Activated CD4-positive, alpha-beta T cell treated with anti-CD3 and anti-CD28 coated beads, Interleukin-2, amount 10 ng/mL, durations not matched to agents 24 days and 14 days (primary cell): ENCODE measurements at regions of chr2 and their contacts with region 1.

Region 1: GRCh38 chr2:98608116-98608999 is at the starts of genes COA5 and UNC50:
- DNase-seq: peak; percentile 98
- H3K4me3 Mint-ChIP-seq: peak within 1 kb of the TSS; percentile 90
- H3K27ac Mint-ChIP-seq: peak within 1 kb of the TSS; percentile 95
- H3K4me1 Mint-ChIP-seq: peaks cover 50% of the 10 kb centered on the region
- H3K27me3 Mint-ChIP-seq: no peaks in the 10 kb centered on the region
- total RNA-seq, gene COA5: 20.4 and 22.0 TPM in 2 replicates
- total RNA-seq, gene UNC50: 38.5 and 39.0 TPM in 2 replicates

Region 2: GRCh38 chr2:98634401-98635092 is 26.2 kb after region 1 on chr2:
- intact Hi-C with region 1: loop called (anchors 2 kb)
- DNase-seq: peak; percentile 80
- H3K4me3 Mint-ChIP-seq: peak overlapping the region; percentile 42
- H3K27ac Mint-ChIP-seq: peak overlapping the region; percentile 82
- H3K4me1 Mint-ChIP-seq: peaks cover 30% of the 10 kb centered on the region
- H3K27me3 Mint-ChIP-seq: no peaks in the 10 kb centered on the region

Region 3: DNA sequence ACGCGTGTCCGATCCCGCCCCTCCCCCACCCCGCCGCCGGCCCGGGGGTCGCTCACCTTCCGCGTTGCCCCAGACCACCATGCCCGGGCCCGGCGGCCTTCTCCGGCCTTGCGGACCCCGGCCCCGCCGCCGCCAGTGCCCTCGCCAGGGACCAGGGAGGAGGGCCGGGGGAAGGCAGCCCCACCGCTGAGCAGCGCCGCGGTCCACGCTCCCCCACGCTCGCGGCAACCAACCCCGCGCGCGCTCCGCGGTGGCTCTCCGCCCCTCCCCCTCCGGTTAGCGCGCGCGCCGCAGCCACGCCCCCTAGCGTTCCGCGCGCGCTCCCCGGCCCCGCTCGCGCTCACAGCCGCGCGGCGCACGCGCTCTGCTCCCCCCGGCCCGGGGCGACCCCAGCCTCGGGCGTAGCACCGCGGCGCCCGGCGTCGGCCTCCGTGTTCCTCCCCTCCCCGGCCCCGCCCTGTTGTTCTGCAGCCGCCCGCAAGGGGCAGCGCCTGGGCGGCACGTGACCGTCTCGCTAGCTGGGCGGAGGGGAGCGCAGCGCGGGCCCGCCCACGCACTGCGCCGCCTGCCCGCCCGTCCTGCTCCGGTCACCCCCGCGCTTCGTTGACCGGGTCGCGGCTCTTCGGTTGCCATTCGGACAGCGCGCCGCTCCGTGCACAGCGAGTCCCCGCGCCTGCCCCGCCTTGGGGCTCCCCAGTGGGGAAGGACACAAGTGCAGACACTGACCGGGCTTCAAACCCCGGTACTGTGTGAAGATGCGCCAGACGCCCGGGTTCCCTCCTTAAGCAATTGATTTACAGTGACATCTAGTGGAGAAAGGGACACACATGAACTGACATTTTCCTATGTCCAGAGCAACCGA is 881.6 kb after region 1 on chr2 and contains the start of gene REV1:
- intact Hi-C with region 1: loop called (anchors 1 kb)
- DNase-seq: peak; percentile 97
- H3K4me3 Mint-ChIP-seq: peak within 1 kb of the TSS; percentile 92
- H3K27ac Mint-ChIP-seq: peak within 1 kb of the TSS; percentile 95
- H3K4me1 Mint-ChIP-seq: peaks cover 25% of the 10 kb centered on the region
- H3K27me3 Mint-ChIP-seq: no peaks in the 10 kb centered on the region
- total RNA-seq, gene REV1: 47.8 and 48.9 TPM in 2 replicates